ENCODE measurements at regions of chr20 and their contacts with region 1.

Region 1: GRCh38 chr20:32652739-32653526 is 20.8 kb downstream of the C20orf203 start:
- DNase-seq: peak; percentile 21
- H3K4me3 ChIP-seq: no peak overlapping the region
- H3K27ac ChIP-seq: no peak overlapping the region
- H3K4me1 ChIP-seq: peaks cover 0 to 5% (median 3%) of the 10 kb centered on the region in 3 donors
- H3K27me3 ChIP-seq: peaks cover 0 to 14% (median 0%) of the 10 kb centered on the region in 4 donors
- CTCF ChIP-seq: peak; percentile 92 to 98 (median 96)
- POLR2A ChIP-seq: no peak

Region 2: GRCh38 chr20:32521780-32522525 is 131.0 kb before region 1 on chr20:
- intact Hi-C with region 1: loop called (anchors 5 kb)
- DNase-seq: no peak
- H3K4me3 ChIP-seq: no peak overlapping the region
- H3K27ac ChIP-seq: no peak overlapping the region
- H3K4me1 ChIP-seq: peaks cover 3 to 49% (median 14%) of the 10 kb centered on the region in 3 donors
- H3K27me3 ChIP-seq: peaks cover 0 to 25% (median 0%) of the 10 kb centered on the region in 4 donors
- CTCF ChIP-seq: peak; percentile 68 to 86 (median 77)
- POLR2A ChIP-seq: no peak

Region 3: GRCh38 chr20:32709632-32710121 is 56.7 kb after region 1 on chr20:
- intact Hi-C with region 1: no loop called
- DNase-seq: no peak
- H3K4me3 ChIP-seq: no peak overlapping the region
- H3K27ac ChIP-seq: no peak overlapping the region
- H3K4me1 ChIP-seq: peaks cover 0 to 10% (median 0%) of the 10 kb centered on the region in 3 donors
- H3K27me3 ChIP-seq: no peaks in the 10 kb centered on the region
- CTCF ChIP-seq: no peak
- POLR2A ChIP-seq: no peak